Right ventricle myocardium inferior (tissue), 1 donor: ENCODE measurements at regions of chr16 and their contacts with region 1.

Region 1: DNA sequence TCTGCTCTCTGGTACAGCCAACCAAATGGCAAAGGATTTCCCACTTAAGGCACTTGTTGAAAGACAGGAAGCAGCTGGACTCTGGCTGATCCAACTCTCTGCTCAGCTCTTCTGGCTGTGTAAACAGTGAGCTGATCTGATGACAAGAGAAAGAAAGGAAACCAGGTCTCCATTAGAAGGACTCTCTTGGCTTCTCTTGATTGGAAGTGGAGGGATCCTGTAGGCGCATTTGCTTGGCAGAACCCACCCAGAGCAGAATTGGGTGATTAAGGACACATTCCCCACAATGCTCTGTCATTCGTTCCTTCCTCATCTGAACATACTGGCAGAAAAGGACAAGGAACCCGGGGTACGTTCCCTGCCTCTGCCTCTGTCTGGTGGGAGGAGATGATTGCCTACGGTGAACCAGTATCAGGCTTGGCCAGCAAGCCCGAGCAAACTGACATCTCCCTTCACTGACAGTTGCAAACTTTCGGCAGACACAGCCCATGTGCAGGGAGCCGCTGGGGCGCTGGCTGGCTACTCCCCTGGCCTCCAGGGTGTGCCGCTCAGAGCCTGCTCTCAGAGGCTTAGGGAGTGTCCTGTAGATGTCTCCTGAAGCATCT is 29.1 kb downstream of the LDHD start:
- DNase-seq: no peak
- ATAC-seq: peak; percentile 95

Region 2: GRCh38 chr16:74998481-74999218 is 88.8 kb before region 1 on chr16 and contains the start of gene ZNRF1:
- intact Hi-C with region 1: loop called (anchors 1 kb)
- DNase-seq: peak; percentile 89
- ATAC-seq: peak; percentile 86
- total RNA-seq, gene ZNRF1: 27.2 TPM

Region 3: DNA sequence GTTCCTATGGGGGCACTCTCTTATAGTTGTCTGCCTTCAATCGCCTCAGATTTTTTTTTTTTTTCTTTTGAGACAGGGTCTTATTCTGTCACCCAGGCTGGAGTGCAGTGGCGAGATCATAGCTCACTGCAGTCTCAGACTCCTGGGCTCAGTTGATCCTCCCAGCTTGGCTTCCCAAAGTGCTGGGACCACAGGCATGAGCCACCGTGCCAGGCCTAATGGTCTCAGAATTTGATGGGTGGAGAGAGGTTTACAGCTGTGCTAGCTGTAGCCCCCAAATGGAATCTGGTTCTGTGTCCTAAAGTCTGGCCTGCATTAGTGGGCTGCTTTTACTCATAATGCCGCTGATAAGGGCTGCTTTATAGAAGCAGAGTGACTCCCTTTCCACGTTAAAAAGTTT is 83.6 kb before region 1 on chr16:
- intact Hi-C with region 1: loop called (anchors 1 kb)
- DNase-seq: no peak
- ATAC-seq: no peak

Region 4: GRCh38 chr16:75305364-75306098 is 218.1 kb after region 1 on chr16:
- intact Hi-C with region 1: no loop called
- DNase-seq: no peak
- ATAC-seq: peak; percentile 90